ENCODE measurements at regions of chr2 and their contacts with region 1.

Region 1: GRCh38 chr2:135052042-135052876 is at the start of gene RAB3GAP1:
- DNase-seq: peak; percentile 94
- H3K4me3 Mint-ChIP-seq: peak within 1 kb of the TSS; percentile 92
- H3K27ac Mint-ChIP-seq: peak within 1 kb of the TSS; percentile 99
- H3K4me1 Mint-ChIP-seq: peaks cover 54% of the 10 kb centered on the region
- H3K27me3 Mint-ChIP-seq: peaks cover 1% of the 10 kb centered on the region
- total RNA-seq, gene RAB3GAP1: 23.4 and 25.6 TPM in 2 replicates

Region 2: GRCh38 chr2:134290358-134290757 is 761.9 kb before region 1 on chr2:
- intact Hi-C with region 1: loop called (anchors 2 kb)
- DNase-seq: peak; percentile 9
- H3K4me3 Mint-ChIP-seq: no peak overlapping the region
- H3K27ac Mint-ChIP-seq: no peak overlapping the region
- H3K4me1 Mint-ChIP-seq: peaks cover 26% of the 10 kb centered on the region
- H3K27me3 Mint-ChIP-seq: peaks cover 10% of the 10 kb centered on the region

Region 3: DNA sequence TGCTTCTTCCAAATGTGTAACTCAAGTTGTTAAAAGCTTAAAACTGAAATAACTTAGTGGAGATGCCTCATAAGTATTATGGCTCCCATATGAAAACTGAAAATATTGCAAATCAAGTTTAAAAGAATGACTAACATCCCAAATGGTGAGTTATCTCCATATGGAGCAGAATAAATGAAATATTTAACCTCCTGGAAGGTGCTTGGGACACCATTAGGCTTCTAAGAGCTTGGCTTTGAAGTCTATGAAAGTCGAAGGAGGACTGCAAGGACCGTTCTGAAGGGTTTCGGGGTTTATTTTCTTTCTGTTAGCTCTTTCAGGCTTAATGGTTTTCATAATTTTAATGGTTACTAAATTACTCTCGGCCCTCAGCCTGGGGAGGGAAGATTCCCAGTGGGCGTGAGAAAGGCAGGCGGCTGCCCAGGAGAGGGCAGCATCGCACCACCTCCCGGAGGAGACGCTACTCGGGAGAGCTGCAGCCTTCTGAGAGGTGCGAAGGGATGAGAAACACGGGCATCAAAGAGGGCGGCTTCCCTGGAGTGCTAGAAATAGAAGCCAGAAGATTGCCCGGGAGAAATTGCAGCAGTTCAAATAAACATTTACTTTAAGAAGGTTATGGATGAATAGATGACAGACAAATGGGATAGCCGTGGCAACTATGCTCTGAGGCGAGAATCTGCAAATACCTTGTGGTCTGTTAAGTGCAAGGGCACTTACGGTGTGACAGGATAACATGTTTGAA is 48.1 kb before region 1 on chr2:
- intact Hi-C with region 1: loop called (anchors 5 kb)
- DNase-seq: peak; percentile 47
- H3K4me3 Mint-ChIP-seq: no peak overlapping the region
- H3K27ac Mint-ChIP-seq: no peak overlapping the region
- H3K4me1 Mint-ChIP-seq: peaks cover 7% of the 10 kb centered on the region
- H3K27me3 Mint-ChIP-seq: peaks cover 13% of the 10 kb centered on the region

Region 4: GRCh38 chr2:135037831-135038230 is 14.4 kb before region 1 on chr2:
- intact Hi-C with region 1: no loop called
- DNase-seq: no peak
- H3K4me3 Mint-ChIP-seq: no peak overlapping the region
- H3K27ac Mint-ChIP-seq: no peak overlapping the region
- H3K4me1 Mint-ChIP-seq: no peaks in the 10 kb centered on the region
- H3K27me3 Mint-ChIP-seq: peaks cover 5% of the 10 kb centered on the region

Region 5: DNA sequence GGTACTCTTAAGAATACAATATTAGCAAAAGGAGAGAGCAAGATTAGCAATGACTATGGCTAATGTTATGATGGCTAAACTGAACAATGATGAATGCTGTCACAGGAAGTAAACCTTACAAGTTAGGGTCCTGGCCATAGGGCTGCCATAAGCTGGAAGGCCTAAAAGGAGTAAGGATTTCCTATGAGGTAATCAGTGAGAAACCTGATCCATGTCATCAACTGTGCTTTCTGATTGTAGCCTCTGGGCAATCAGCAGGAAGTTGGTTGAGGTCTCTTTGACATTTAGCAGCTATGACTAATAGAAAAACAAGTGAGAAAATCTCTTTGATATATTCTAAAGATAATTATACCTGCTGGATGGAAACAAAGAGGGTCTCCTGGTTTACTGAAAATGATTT is 192.8 kb after region 1 on chr2:
- intact Hi-C with region 1: loop called (anchors 1 kb)
- DNase-seq: peak; percentile 6
- H3K4me3 Mint-ChIP-seq: no peak overlapping the region
- H3K27ac Mint-ChIP-seq: peak overlapping the region; percentile 32
- H3K4me1 Mint-ChIP-seq: peaks cover 16% of the 10 kb centered on the region
- H3K27me3 Mint-ChIP-seq: no peaks in the 10 kb centered on the region

Region 6: GRCh38 chr2:135741395-135742324 is 689.4 kb after region 1 on chr2 and contains the start of gene UBXN4:
- intact Hi-C with region 1: loop called (anchors 1 kb)
- DNase-seq: peak; percentile 89
- H3K4me3 Mint-ChIP-seq: peak within 1 kb of the TSS; percentile 99
- H3K27ac Mint-ChIP-seq: peak within 1 kb of the TSS; percentile 100
- H3K4me1 Mint-ChIP-seq: peaks cover 36% of the 10 kb centered on the region
- H3K27me3 Mint-ChIP-seq: no peaks in the 10 kb centered on the region
- total RNA-seq, gene UBXN4: 115 and 121 TPM in 2 replicates

Region 7: GRCh38 chr2:136117909-136118818 is 1065.9 kb after region 1 on chr2 and contains the start of gene CXCR4:
- intact Hi-C with region 1: loop called (anchors 2 kb)
- DNase-seq: peak; percentile 85
- H3K4me3 Mint-ChIP-seq: peak within 1 kb of the TSS; percentile 97
- H3K27ac Mint-ChIP-seq: peak within 1 kb of the TSS; percentile 98
- H3K4me1 Mint-ChIP-seq: peaks cover 73% of the 10 kb centered on the region
- H3K27me3 Mint-ChIP-seq: peaks cover 31% of the 10 kb centered on the region
- total RNA-seq, gene CXCR4: 83.3 and 86.3 TPM in 2 replicates

Region 8: DNA sequence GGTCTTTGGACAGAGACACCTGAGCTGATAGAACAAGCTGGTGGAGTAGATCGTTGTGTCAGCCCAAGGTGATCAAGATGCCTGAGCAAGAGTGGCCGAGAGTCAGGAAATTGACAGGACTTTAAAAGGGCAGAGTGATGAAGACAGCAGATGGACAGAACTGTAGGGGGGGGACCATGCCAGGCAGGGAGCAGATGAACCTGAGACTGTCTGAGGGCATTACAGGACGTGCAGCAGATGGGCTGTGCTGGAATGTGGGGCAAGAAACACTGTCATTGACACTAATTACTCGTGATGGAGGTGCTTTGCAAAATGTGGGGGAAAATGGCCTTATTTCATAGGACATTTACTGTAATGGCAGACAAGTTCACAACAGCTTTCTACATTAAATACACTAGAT is 1938.1 kb after region 1 on chr2:
- intact Hi-C with region 1: no loop called
- DNase-seq: no peak
- H3K4me3 Mint-ChIP-seq: no peak overlapping the region
- H3K27ac Mint-ChIP-seq: no peak overlapping the region
- H3K4me1 Mint-ChIP-seq: no peaks in the 10 kb centered on the region
- H3K27me3 Mint-ChIP-seq: no peaks in the 10 kb centered on the region